A549 (cell line): ENCODE measurements at regions of chr10 and their contacts with region 1.

Region 1: DNA sequence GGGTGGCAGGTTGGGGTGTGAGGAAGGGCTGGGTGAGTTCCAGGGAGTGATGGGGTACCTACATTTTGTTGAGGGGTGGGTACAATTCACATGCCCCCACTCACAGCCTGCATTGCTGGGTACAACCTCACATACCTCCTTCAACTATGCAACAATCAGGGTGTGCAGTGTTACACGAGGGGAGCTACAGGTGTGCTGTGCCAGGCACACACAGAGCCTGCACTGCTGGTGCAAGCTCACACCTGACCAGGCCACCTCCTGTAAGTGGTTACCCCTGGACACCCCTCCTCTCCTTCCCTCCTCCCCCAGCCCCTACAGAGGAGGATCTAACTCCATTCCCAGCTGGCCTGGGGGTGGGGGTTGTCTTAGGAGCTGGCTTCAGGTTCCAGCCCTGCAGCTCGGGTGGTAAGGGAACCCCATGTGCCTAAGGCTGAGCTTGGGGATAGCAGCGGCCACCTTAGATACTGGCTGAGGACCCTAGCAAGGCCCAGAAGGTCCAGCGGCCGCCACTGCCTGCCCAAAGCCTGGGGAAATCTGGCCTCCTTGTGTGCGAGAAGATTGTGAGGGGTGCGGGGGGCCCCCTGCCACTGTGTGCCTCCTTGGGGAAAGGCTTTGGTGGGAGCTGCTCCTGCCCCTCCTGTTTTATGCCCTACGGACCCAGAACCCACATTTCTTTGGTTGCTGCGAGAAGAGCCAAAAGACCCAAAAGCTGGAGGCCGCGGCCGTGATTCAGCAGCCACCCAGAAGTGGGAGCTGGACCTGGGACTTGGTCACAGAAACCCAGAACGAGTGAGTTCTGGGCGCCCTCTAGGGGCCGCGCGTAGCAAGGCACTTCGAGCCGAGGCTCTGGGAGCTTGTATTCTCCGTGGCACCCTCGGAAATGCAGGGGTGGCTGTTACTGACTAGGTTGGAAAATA is 10.8 kb downstream of the TLX1 start:
- DNase-seq: peak; percentile 82 to 94
- ATAC-seq: peak; percentile 87 to 96
- H3K4me3 ChIP-seq: no peak overlapping the region
- H3K27ac ChIP-seq: peak overlapping the region; percentile 53 to 83
- H3K4me1 ChIP-seq: 0 out of 3 replicates have a peak, but pooled peaks cover 3% of the 10 kb centered on the region
- CTCF ChIP-seq: peak; percentile 94
- EP300 ChIP-seq: no peak
- POLR2A ChIP-seq: no peak
- RAD21 ChIP-seq: peak; percentile 91 to 92

Region 2: GRCh38 chr10:100781145-100781665 is 360.7 kb before region 1 on chr10:
- CTCF ChIA-PET with region 1: no interaction called
- POLR2A ChIA-PET with region 1: no interaction called
- DNase-seq: no peak
- ATAC-seq: no peak
- H3K4me3 ChIP-seq: no peak overlapping the region
- H3K27ac ChIP-seq: no peak overlapping the region
- H3K4me1 ChIP-seq: no peaks in the 10 kb centered on the region
- CTCF ChIP-seq: no peak
- EP300 ChIP-seq: no peak
- POLR2A ChIP-seq: no peak
- RAD21 ChIP-seq: no peak

Region 3: DNA sequence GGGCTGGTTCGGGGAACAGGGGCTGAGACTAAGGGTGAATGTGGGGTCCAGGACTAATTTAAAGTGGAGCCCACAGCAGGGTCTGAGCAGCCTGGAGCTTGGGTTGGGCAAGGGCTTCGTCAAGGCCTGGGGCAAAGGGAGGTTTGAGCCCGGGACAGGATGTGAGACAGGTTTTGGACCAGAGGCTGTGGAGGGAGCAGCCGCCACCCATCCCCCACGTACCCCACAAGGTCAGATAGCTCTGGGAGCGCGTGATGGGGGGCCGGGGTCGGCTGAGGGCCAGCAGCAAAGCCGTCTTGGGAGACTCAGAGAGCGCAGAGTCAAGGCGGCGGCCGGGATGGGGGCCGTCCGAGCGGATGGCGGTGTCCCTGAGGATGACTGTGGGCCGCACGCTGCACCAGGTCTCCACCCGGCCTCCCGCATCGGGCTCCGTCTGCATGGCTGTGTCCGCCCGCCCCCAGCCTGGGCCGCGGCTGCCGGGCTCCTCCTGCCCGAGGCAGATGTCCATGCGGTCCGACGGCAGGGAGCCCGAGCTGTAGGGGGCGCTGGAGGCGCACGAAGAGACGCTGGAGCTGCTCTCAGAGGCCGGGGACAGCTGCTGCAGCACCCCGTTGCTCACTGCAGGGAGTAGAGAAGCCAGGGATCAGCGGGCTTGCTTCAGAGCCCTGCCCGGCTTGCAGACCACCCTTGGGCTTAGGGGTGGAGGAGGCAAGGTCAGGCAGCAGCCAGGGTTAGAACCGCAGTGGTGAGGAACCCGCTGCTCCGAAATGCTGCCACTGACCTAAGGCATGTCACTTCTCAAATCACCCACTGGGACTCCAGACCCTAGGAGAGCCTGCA is 123.1 kb before region 1 on chr10:
- CTCF ChIA-PET with region 1: interaction called, 14 read pairs
- POLR2A ChIA-PET with region 1: no interaction called
- DNase-seq: peak; percentile 82 to 95
- ATAC-seq: peak; percentile 80 to 93
- H3K4me3 ChIP-seq: no peak overlapping the region
- H3K27ac ChIP-seq: peak overlapping the region; percentile 35 to 76; a peak in 4 of 6 replicates
- H3K4me1 ChIP-seq: peaks cover 14% of the 10 kb centered on the region
- CTCF ChIP-seq: peak; percentile 78
- EP300 ChIP-seq: no peak
- POLR2A ChIP-seq: no peak
- RAD21 ChIP-seq: peak; percentile 75 to 78

Region 4: GRCh38 chr10:101050208-101051069 is 91.4 kb before region 1 on chr10:
- CTCF ChIA-PET with region 1: interaction called, 43 read pairs
- POLR2A ChIA-PET with region 1: interaction called, 3 read pairs
- DNase-seq: peak in 1 of 2 experiments; percentile 50
- ATAC-seq: peak; percentile 83 to 93
- H3K4me3 ChIP-seq: peak overlapping the region; percentile 37
- H3K27ac ChIP-seq: peak overlapping the region; percentile 60 to 81; a peak in 5 of 6 replicates
- H3K4me1 ChIP-seq: peaks cover 24% of the 10 kb centered on the region
- CTCF ChIP-seq: peak; percentile 78
- EP300 ChIP-seq: no peak
- POLR2A ChIP-seq: no peak
- RAD21 ChIP-seq: peak; percentile 56 to 70

Region 5: DNA sequence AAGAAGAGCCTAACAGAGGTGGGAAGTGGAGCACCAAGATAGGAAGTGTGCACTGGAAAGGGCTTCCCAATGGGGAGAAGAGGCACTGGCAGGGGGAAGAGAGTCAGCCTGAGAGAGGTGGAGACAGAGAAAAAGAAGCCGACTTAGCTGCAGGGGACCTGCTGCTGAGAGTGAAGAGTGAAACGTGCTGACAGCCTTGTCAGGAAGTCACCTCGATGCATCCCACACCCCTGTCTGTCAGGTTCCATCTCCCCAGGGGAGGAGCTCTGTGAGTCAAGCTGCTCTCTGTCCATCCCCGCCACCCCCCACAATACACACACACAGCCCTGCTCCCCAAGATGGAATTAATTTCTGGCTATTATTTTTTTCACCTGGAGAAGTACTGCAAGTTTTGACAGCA is 66.1 kb before region 1 on chr10:
- CTCF ChIA-PET with region 1: interaction called, 26 read pairs
- POLR2A ChIA-PET with region 1: no interaction called
- DNase-seq: no peak
- ATAC-seq: peak in 1 of 2 experiments; percentile 29; a peak in 3 of 6 replicates
- H3K4me3 ChIP-seq: no peak overlapping the region
- H3K27ac ChIP-seq: no peak overlapping the region
- H3K4me1 ChIP-seq: no peaks in the 10 kb centered on the region
- CTCF ChIP-seq: no peak
- EP300 ChIP-seq: no peak
- POLR2A ChIP-seq: no peak
- RAD21 ChIP-seq: no peak

Region 6: GRCh38 chr10:101095542-101096213 is 46.2 kb before region 1 on chr10:
- CTCF ChIA-PET with region 1: interaction called, 463 read pairs
- POLR2A ChIA-PET with region 1: interaction called, 10 read pairs
- DNase-seq: peak; percentile 82 to 83
- ATAC-seq: peak; percentile 65 to 86
- H3K4me3 ChIP-seq: no peak overlapping the region
- H3K27ac ChIP-seq: peak overlapping the region in 1 of 2 experiments; percentile 4; a peak in 1 of 6 replicates
- H3K4me1 ChIP-seq: peaks cover 46% of the 10 kb centered on the region
- CTCF ChIP-seq: peak; percentile 81
- EP300 ChIP-seq: no peak
- POLR2A ChIP-seq: no peak
- RAD21 ChIP-seq: peak; percentile 55 to 63

Region 7: GRCh38 chr10:101130984-101131961 is 10.6 kb before region 1 on chr10 and contains the start of gene TLX1:
- CTCF ChIA-PET with region 1: interaction called, 24 read pairs
- POLR2A ChIA-PET with region 1: no interaction called
- DNase-seq: no peak
- ATAC-seq: peak; percentile 32 to 66; a peak in 3 of 6 replicates
- H3K4me3 ChIP-seq: peak within 1 kb of the TSS; percentile 33; the same call in 2 of the 3 replicates
- H3K27ac ChIP-seq: peak within 1 kb of the TSS in 1 of 2 experiments; percentile 53; a peak in 2 of 6 replicates
- H3K4me1 ChIP-seq: no peaks in the 10 kb centered on the region
- CTCF ChIP-seq: no peak
- EP300 ChIP-seq: no peak
- POLR2A ChIP-seq: no peak
- RAD21 ChIP-seq: no peak
- polyA plus RNA-seq, gene TLX1: 0.06 and 0.09 TPM in 2 replicates

Region 8: DNA sequence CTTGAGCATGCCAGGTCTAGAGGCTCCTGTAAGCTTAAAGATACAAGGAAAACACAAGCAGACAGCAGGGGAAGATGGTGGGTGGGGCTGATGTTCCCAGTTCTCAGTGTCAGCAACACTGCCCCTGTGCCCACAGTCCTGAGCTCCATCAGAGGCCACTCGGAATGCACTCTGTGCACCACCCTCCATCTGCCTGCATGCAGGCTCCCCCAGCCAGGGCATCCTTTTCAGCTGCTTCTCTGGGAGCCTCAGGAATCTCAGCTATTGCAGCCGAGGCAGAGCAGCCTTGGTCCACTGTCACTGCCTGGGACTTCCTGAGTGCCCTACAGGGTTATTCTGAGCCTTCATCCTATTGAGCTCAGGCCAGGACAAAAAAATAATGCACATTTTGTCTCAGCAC is 65.2 kb after region 1 on chr10:
- CTCF ChIA-PET with region 1: interaction called, 10 read pairs
- POLR2A ChIA-PET with region 1: no interaction called
- DNase-seq: no peak
- ATAC-seq: peak; percentile 35 to 52; a peak in 4 of 6 replicates
- H3K4me3 ChIP-seq: no peak overlapping the region
- H3K27ac ChIP-seq: no peak overlapping the region
- H3K4me1 ChIP-seq: no peaks in the 10 kb centered on the region
- CTCF ChIP-seq: no peak
- EP300 ChIP-seq: no peak
- POLR2A ChIP-seq: no peak
- RAD21 ChIP-seq: no peak